ENCODE measurements at regions of chr11 and their contacts with region 1.

Region 1: DNA sequence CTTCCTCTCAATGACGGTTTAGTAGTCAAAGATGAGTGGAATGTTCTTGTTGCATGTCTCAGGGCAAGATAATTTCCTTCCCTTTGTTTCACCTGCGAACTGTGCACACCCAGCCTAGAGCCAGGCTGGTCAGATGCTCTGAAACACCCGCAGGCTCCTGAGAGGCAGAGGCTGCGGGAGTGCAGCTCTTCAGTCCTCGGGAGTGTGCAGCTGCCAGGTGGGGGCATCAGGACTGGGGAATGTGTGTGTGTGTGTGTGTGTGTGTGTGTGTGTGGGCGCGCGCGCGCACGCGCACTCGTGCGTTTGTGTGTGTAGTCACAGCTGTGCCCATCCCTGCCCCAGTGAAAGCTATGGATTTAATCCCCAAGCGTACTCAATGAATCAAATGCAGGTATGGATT is 136.2 kb upstream of the NTM start:
- DNase-seq: no peak
- ATAC-seq: peak in 1 of 4 donors; percentile 18
- H3K4me3 ChIP-seq: no peak overlapping the region
- H3K27ac ChIP-seq: no peak overlapping the region
- H3K4me1 ChIP-seq: no peaks in the 10 kb centered on the region
- H3K27me3 ChIP-seq: peaks cover 0 to 3% (median 0%) of the 10 kb centered on the region in 9 donors
- CTCF ChIP-seq: no peak
- POLR2A ChIP-seq: no peak

Region 2: DNA sequence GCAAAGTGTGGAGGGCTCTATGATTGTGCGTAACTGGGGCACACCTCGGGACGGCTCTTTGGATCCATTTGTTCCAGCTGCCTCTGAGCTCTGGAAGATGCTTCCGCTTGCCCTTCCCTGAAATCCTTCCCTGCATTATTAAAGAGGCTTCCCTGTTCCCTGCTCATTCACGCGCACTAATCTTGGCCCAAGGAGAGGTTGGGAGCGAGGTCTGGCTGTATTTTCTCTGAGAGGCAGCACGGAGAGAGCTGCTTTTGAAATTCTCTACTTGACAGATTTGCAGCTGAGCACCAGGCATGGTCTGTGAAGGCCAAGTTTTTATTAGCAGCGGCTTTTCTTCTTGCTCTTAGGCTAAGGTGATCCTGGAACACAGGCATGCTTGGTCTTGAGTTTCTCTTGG is 41.4 kb after region 1 on chr11:
- intact Hi-C with region 1: no loop called
- DNase-seq: no peak
- ATAC-seq: no peak
- H3K4me3 ChIP-seq: no peak overlapping the region
- H3K27ac ChIP-seq: no peak overlapping the region
- H3K4me1 ChIP-seq: no peaks in the 10 kb centered on the region
- H3K27me3 ChIP-seq: peaks cover 0 to 18% (median 0%) of the 10 kb centered on the region in 9 donors
- CTCF ChIP-seq: no peak
- POLR2A ChIP-seq: no peak

Region 3: DNA sequence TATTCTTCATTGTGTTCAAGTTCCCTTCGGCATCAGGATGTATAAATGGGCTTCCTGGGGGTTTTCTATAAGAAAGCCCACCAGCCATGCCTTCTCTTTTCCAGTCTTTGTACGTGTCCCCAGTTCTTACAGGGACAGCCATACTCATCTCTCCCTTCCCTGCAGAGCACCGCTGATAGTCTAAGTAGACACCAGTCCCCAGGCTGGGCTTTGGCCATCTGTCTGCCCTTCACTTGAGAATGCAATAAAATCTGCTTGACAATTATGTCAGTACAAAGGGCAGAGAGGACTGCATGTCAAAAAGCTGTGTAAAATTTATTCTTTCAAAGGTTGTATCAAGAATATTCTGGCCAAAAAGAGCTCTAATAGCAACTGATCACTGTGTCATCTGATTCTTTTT is 163.5 kb after region 1 on chr11:
- intact Hi-C with region 1: loop called in 1 of 10 experiments (anchors 5 kb)
- DNase-seq: no peak
- ATAC-seq: no peak
- H3K4me3 ChIP-seq: no peak overlapping the region
- H3K27ac ChIP-seq: no peak overlapping the region
- H3K4me1 ChIP-seq: no peaks in the 10 kb centered on the region
- H3K27me3 ChIP-seq: peaks cover 0 to 5% (median 0%) of the 10 kb centered on the region in 9 donors
- CTCF ChIP-seq: no peak
- POLR2A ChIP-seq: no peak